Heart left ventricle (tissue), 16 donors: ENCODE measurements at regions of chr6 and their contacts with region 1.

Region 1: DNA sequence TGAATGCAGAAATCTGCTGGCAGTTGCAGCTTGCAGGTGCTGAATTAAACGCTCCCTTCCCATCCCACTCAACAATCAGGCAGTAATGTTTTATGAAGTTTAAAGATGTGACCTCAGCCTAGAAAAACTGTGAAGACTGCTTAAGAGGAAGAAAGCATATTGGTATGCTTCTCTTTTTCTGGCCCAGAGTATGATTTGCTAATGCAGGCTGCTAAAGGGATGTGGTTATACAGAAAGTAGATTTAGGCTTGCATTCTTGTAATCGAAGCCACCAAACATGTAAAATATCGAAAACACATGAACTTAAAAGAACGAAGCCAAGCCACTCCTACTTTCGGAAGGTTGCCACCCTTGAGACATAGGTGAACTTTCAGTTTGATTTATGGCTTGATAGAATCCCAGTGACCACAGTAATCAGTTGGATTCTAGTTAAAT is 40.7 kb downstream of the MAP3K5 start:
- DNase-seq: no peak
- ATAC-seq: peak in 2 of 4 donors; percentile 33 to 45
- H3K4me3 ChIP-seq: peak overlapping the region in 1 of 12 donors; percentile 9
- H3K27ac ChIP-seq: peak overlapping the region in 11 of 12 donors; percentile 12 to 82 (median 46)
- H3K4me1 ChIP-seq: peaks cover 0 to 58% (median 19%) of the 10 kb centered on the region in 12 donors
- H3K27me3 ChIP-seq: no peaks in the 10 kb centered on the region
- CTCF ChIP-seq: no peak
- POLR2A ChIP-seq: no peak

Region 2: GRCh38 chr6:136254851-136255466 is 496.6 kb before region 1 on chr6:
- intact Hi-C with region 1: no loop called
- DNase-seq: no peak
- ATAC-seq: no peak
- H3K4me3 ChIP-seq: no peak overlapping the region
- H3K27ac ChIP-seq: no peak overlapping the region
- H3K4me1 ChIP-seq: peaks cover 0 to 11% (median 9%) of the 10 kb centered on the region in 12 donors
- H3K27me3 ChIP-seq: no peaks in the 10 kb centered on the region
- CTCF ChIP-seq: no peak
- POLR2A ChIP-seq: no peak

Region 3: GRCh38 chr6:136696238-136696637 is 55.3 kb before region 1 on chr6:
- intact Hi-C with region 1: no loop called
- DNase-seq: no peak
- ATAC-seq: peak in 2 of 4 donors; percentile 26 to 62
- H3K4me3 ChIP-seq: no peak overlapping the region
- H3K27ac ChIP-seq: peak overlapping the region in 1 of 12 donors; percentile 28
- H3K4me1 ChIP-seq: peaks cover 0 to 15% (median 0%) of the 10 kb centered on the region in 12 donors
- H3K27me3 ChIP-seq: no peaks in the 10 kb centered on the region
- CTCF ChIP-seq: no peak
- POLR2A ChIP-seq: no peak

Region 4: GRCh38 chr6:136783495-136784270 is 32.1 kb after region 1 on chr6:
- intact Hi-C with region 1: loop called in 1 of 10 experiments (anchors 5 kb)
- DNase-seq: peak in 4 of 5 donors; percentile 35 to 51 (median 42)
- ATAC-seq: peak in 3 of 4 donors; percentile 49 to 78 (median 71)
- H3K4me3 ChIP-seq: peak overlapping the region in 7 of 12 donors; percentile 4 to 50 (median 21)
- H3K27ac ChIP-seq: peak overlapping the region in 10 of 12 donors; percentile 1 to 84 (median 16)
- H3K4me1 ChIP-seq: peaks cover 2 to 83% (median 63%) of the 10 kb centered on the region in 12 donors
- H3K27me3 ChIP-seq: no peaks in the 10 kb centered on the region
- CTCF ChIP-seq: no peak
- POLR2A ChIP-seq: no peak